Activated CD8-positive, alpha-beta T cell treated with anti-CD3 and anti-CD28 coated beads, Interleukin-2, amount 10 ng/mL, durations not matched to agents 7 days and 5 days (primary cell): ENCODE measurements at regions of chr15 and their contacts with region 1.

Region 1: GRCh38 chr15:74540761-74541493 is at the start of gene ARID3B:
- DNase-seq: peak; percentile 99
- ATAC-seq: peak; percentile 92
- H3K4me3 Mint-ChIP-seq: peak within 1 kb of the TSS; percentile 98
- H3K27ac Mint-ChIP-seq: peak within 1 kb of the TSS; percentile 99
- H3K4me1 Mint-ChIP-seq: peaks cover 57% of the 10 kb centered on the region
- H3K27me3 Mint-ChIP-seq: no peaks in the 10 kb centered on the region
- total RNA-seq, gene ARID3B: 39.8 to 40.1 TPM

Region 2: DNA sequence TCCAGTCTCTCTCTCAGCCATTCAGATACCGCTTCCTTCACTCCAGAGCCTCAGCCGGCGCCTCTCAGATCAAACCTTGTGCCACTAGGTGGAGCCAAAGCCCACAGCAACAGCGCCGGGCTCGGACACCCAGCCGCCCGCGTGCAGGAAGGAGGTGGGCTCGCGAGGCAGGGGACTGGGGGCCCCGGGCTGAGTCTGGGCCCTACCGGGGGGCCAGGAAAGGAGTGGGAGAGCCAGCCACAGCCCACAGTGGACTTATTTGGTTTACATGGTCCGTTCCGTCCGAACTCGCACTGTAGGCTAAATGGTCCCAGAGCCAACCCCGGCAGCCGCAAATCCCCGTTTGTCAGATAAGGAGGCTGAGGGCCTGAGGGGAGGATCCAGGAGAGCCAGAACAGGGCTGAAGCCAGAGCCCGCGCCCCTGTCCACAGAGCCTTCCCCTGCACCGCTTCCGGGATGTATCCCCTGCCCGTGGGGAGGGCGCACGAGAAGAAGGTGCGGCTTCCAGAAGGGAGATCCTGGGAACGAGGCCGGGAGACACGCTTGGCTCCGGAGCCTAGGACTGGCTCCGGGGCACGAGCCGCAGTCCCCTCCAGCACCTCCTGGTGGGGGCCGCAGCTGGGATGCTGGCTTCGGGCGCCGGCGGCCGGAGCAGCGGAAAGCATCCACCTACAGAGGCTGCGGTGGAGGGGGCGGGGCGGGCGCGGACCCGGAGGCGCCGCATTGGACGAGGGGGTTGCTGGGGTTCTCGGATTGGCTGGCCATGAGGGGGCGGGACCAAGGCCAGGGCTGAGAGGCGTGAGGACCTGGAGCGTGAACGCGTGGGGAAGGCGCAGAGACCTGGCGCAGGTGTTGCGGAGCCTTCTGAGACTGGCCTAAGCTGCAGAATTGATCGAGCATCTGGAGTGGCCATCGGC is 166.9 kb before region 1 on chr15:
- CTCF ChIA-PET with region 1: interaction called, 14 read pairs
- POLR2A ChIA-PET with region 1: interaction called, 5 read pairs
- DNase-seq: peak; percentile 97
- ATAC-seq: peak; percentile 97
- H3K4me3 Mint-ChIP-seq: peak overlapping the region; percentile 77
- H3K27ac Mint-ChIP-seq: peak overlapping the region; percentile 75
- H3K4me1 Mint-ChIP-seq: peaks cover 25% of the 10 kb centered on the region
- H3K27me3 Mint-ChIP-seq: peaks cover 18% of the 10 kb centered on the region

Region 3: GRCh38 chr15:74407055-74407691 is 133.8 kb before region 1 on chr15:
- CTCF ChIA-PET with region 1: no interaction called
- POLR2A ChIA-PET with region 1: interaction called, 14 read pairs
- DNase-seq: no peak
- ATAC-seq: no peak
- H3K4me3 Mint-ChIP-seq: no peak overlapping the region
- H3K27ac Mint-ChIP-seq: peak overlapping the region; percentile 35
- H3K4me1 Mint-ChIP-seq: peaks cover 33% of the 10 kb centered on the region
- H3K27me3 Mint-ChIP-seq: no peaks in the 10 kb centered on the region

Region 4: GRCh38 chr15:74460871-74461846 is 79.8 kb before region 1 on chr15 and contains the start of gene UBL7:
- CTCF ChIA-PET with region 1: interaction called, 7 read pairs
- POLR2A ChIA-PET with region 1: interaction called, 32 read pairs
- DNase-seq: peak; percentile 99
- ATAC-seq: peak; percentile 95
- H3K4me3 Mint-ChIP-seq: peak within 1 kb of the TSS; percentile 89
- H3K27ac Mint-ChIP-seq: peak within 1 kb of the TSS; percentile 81
- H3K4me1 Mint-ChIP-seq: peaks cover 54% of the 10 kb centered on the region
- H3K27me3 Mint-ChIP-seq: no peaks in the 10 kb centered on the region
- total RNA-seq, gene UBL7: 60.8 to 71.4 TPM

Region 5: GRCh38 chr15:74489518-74490338 is 51.2 kb before region 1 on chr15:
- CTCF ChIA-PET with region 1: interaction called, 13 read pairs
- POLR2A ChIA-PET with region 1: interaction called, 4 read pairs
- DNase-seq: peak; percentile 92
- ATAC-seq: peak; percentile 96
- H3K4me3 Mint-ChIP-seq: peak overlapping the region; percentile 73
- H3K27ac Mint-ChIP-seq: peak overlapping the region; percentile 91
- H3K4me1 Mint-ChIP-seq: peaks cover 34% of the 10 kb centered on the region
- H3K27me3 Mint-ChIP-seq: no peaks in the 10 kb centered on the region

Region 6: GRCh38 chr15:74552773-74553441 is 12.0 kb after region 1 on chr15:
- CTCF ChIA-PET with region 1: interaction called, 8 read pairs
- POLR2A ChIA-PET with region 1: interaction called, 11 read pairs
- DNase-seq: peak; percentile 53
- ATAC-seq: peak; percentile 83
- H3K4me3 Mint-ChIP-seq: peak overlapping the region; percentile 56
- H3K27ac Mint-ChIP-seq: peak overlapping the region; percentile 80
- H3K4me1 Mint-ChIP-seq: peaks cover 60% of the 10 kb centered on the region
- H3K27me3 Mint-ChIP-seq: no peaks in the 10 kb centered on the region

Region 7: GRCh38 chr15:74584779-74585178 is 43.9 kb after region 1 on chr15:
- CTCF ChIA-PET with region 1: no interaction called
- POLR2A ChIA-PET with region 1: no interaction called
- DNase-seq: no peak
- ATAC-seq: no peak
- H3K4me3 Mint-ChIP-seq: no peak overlapping the region
- H3K27ac Mint-ChIP-seq: peak overlapping the region; percentile 75
- H3K4me1 Mint-ChIP-seq: peaks cover 17% of the 10 kb centered on the region
- H3K27me3 Mint-ChIP-seq: no peaks in the 10 kb centered on the region

Region 8: GRCh38 chr15:74615508-74616365 is 74.8 kb after region 1 on chr15 and contains the start of gene CLK3:
- CTCF ChIA-PET with region 1: interaction called, 9 read pairs
- POLR2A ChIA-PET with region 1: interaction called, 38 read pairs
- DNase-seq: peak; percentile 96
- ATAC-seq: peak; percentile 82
- H3K4me3 Mint-ChIP-seq: peak within 1 kb of the TSS; percentile 98
- H3K27ac Mint-ChIP-seq: peak within 1 kb of the TSS; percentile 97
- H3K4me1 Mint-ChIP-seq: peaks cover 48% of the 10 kb centered on the region
- H3K27me3 Mint-ChIP-seq: no peaks in the 10 kb centered on the region
- total RNA-seq, gene CLK3: 125 to 128 TPM